Naive thymus-derived CD4-positive, alpha-beta T cell (primary cell): ENCODE measurements at regions of chr1 and their contacts with region 1.

Region 1: DNA sequence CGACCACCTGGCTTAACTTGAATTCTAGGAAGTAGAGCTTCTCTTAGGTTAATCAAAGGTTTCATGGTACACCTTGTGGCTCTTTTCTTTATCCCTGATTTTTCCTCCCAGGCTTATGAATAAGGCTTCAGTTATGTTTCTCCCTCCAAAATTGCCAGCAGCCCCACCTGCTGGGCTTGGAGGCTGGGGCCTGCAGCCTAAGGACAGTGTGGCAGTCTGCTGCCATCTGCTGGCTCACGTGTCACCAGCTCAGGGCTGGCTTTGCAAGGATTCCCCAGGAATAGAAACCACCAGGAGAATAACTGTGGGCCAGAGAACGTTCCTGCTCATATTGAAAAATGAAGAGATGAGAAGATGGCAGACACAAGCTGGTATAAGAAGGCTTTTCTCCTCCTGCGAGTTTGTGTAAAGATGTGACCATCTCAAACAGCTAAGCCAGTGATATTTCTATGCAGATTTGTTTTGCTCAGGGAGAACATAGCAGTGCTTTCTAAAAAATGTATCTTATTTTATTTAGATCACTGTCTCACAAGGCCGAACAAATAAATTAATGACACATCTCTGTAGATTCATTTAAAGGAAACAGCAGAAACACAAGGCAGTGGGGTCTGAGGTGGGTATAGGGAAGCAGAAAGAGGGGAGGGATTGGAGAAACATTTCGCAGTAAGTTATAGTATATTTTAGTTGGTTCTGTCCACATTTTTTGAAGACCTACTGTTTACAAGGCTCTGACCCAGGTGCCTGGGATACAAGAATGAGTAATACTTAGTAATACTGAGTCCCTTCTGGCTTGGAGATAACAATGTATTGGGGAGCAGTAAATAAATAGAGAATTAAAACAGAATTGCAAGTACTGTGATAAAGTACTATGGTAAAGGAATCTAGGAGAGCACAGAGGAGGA is 291.1 kb upstream of the SGIP1 start:
- DNase-seq: peak; percentile 43 to 75 (median 65)
- ATAC-seq: peak; percentile 93
- H3K4me3 ChIP-seq: no peak overlapping the region
- H3K4me3 Mint-ChIP-seq: no peak overlapping the region
- H3K27ac ChIP-seq: no peak overlapping the region
- H3K27ac Mint-ChIP-seq: no peak overlapping the region
- H3K4me1 ChIP-seq: peaks cover 17 to 36% of the 10 kb centered on the region in 2 donors
- H3K4me1 Mint-ChIP-seq: peaks cover 7 to 31% (median 15%) of the 10 kb centered on the region in 7 donors
- H3K27me3 ChIP-seq: no peaks in the 10 kb centered on the region
- H3K27me3 Mint-ChIP-seq: peaks cover 6 to 7% (median 6%) of the 10 kb centered on the region in 5 donors

Region 2: DNA sequence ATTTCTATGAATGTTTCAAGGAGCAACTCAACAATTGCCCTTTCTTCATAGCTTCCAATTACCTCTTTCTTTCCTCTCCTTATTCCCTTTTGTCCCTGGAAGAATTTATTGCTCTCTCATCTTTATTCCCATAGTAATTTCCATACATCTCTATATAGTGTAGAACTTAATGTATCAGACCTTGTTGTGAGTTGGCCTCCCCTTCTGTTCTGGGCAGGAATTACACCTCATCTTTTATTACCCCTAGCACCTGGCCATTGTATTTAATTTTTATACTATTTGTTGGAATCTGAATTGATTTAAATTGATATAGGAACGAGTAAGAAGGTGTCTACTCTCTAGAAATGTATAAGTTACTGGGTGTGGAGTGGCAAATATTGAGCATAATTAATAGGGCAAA is 1658.4 kb before region 1 on chr1:
- CTCF ChIA-PET with region 1: no interaction called
- POLR2A ChIA-PET with region 1: no interaction called
- intact Hi-C with region 1: no loop called
- DNase-seq: no peak
- ATAC-seq: no peak
- H3K4me3 ChIP-seq: no peak overlapping the region
- H3K4me3 Mint-ChIP-seq: no peak overlapping the region
- H3K27ac ChIP-seq: no peak overlapping the region
- H3K27ac Mint-ChIP-seq: peak overlapping the region in 1 of 9 donors; percentile 11
- H3K4me1 ChIP-seq: peaks cover 0 to 7% of the 10 kb centered on the region in 2 donors
- H3K4me1 Mint-ChIP-seq: peaks cover 3 to 22% (median 12%) of the 10 kb centered on the region in 7 donors
- H3K27me3 ChIP-seq: no peaks in the 10 kb centered on the region
- H3K27me3 Mint-ChIP-seq: peaks cover 0 to 3% (median 0%) of the 10 kb centered on the region in 5 donors

Region 3: DNA sequence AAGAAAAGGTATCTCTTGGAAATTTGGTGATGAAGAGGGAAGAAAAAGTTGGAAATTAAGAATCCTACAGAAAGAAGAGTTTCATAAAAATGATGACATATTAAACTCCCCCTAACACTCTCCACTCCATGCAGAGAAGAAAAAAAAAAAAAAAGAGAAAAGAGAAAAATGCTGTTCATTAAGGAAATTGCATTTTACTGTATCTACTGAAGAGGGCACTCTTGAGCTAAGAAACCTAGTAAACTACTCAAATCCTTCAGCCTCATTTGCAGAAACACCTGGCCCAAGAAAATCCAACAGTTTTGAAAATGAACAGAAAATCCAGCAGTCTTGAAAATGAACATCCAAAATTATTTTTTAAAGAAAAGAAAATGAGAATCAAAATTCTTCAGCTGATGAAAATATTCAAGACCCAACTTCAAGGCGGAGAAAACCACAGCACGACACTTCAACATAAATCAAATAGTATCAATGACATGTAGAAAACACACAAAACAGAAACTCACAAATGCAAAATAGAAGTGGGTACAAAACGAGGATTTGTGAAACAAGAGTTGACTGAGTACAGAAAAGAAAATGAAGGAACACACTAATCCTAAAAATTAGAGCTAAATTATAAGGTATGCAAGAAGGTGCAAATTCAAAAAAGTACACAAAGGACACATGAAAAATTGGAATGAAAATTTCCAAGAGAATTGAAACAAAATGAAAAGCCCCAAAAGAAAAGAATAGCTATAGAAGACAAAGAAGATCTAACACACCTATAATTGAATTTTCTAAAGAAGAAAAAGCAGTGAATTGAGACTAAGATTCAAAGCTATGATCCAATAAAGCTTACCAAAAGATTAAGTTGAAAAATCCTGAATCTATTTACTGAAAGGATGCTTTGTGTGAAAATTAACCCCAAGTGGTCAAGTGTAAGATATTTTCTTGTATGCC is 1006.8 kb before region 1 on chr1:
- CTCF ChIA-PET with region 1: interaction called, 4 read pairs
- POLR2A ChIA-PET with region 1: no interaction called
- intact Hi-C with region 1: loop called in 1 of 2 experiments (anchors 5 kb)
- DNase-seq: peak in 4 of 9 donors; percentile 12 to 28 (median 22)
- ATAC-seq: peak; percentile 54
- H3K4me3 ChIP-seq: no peak overlapping the region
- H3K4me3 Mint-ChIP-seq: no peak overlapping the region
- H3K27ac ChIP-seq: no peak overlapping the region
- H3K27ac Mint-ChIP-seq: no peak overlapping the region
- H3K4me1 ChIP-seq: no peaks in the 10 kb centered on the region
- H3K4me1 Mint-ChIP-seq: peaks cover 2 to 18% (median 2%) of the 10 kb centered on the region in 7 donors
- H3K27me3 ChIP-seq: no peaks in the 10 kb centered on the region
- H3K27me3 Mint-ChIP-seq: peaks cover 6 to 23% (median 14%) of the 10 kb centered on the region in 5 donors

Region 4: GRCh38 chr1:65812065-65812464 is 430.8 kb before region 1 on chr1:
- CTCF ChIA-PET with region 1: no interaction called
- POLR2A ChIA-PET with region 1: no interaction called
- intact Hi-C with region 1: loop called in 1 of 2 experiments (anchors 1 kb)
- DNase-seq: peak in 1 of 9 donors; percentile 67
- ATAC-seq: peak; percentile 94
- H3K4me3 ChIP-seq: no peak overlapping the region
- H3K4me3 Mint-ChIP-seq: peak overlapping the region in 1 of 10 donors; percentile 3
- H3K27ac ChIP-seq: no peak overlapping the region
- H3K27ac Mint-ChIP-seq: peak overlapping the region in 1 of 9 donors; percentile 67
- H3K4me1 ChIP-seq: no peaks in the 10 kb centered on the region
- H3K4me1 Mint-ChIP-seq: peaks cover 0 to 26% (median 0%) of the 10 kb centered on the region in 7 donors
- H3K27me3 ChIP-seq: no peaks in the 10 kb centered on the region
- H3K27me3 Mint-ChIP-seq: peaks cover 18 to 24% (median 19%) of the 10 kb centered on the region in 5 donors

Region 5: GRCh38 chr1:66088787-66089186 is 154.1 kb before region 1 on chr1:
- CTCF ChIA-PET with region 1: no interaction called
- POLR2A ChIA-PET with region 1: no interaction called
- intact Hi-C with region 1: loop called in 1 of 2 experiments (anchors 5 kb)
- DNase-seq: no peak
- ATAC-seq: no peak
- H3K4me3 ChIP-seq: no peak overlapping the region
- H3K4me3 Mint-ChIP-seq: no peak overlapping the region
- H3K27ac ChIP-seq: no peak overlapping the region
- H3K27ac Mint-ChIP-seq: no peak overlapping the region
- H3K4me1 ChIP-seq: no peaks in the 10 kb centered on the region
- H3K4me1 Mint-ChIP-seq: peaks cover 0 to 7% (median 4%) of the 10 kb centered on the region in 7 donors
- H3K27me3 ChIP-seq: no peaks in the 10 kb centered on the region
- H3K27me3 Mint-ChIP-seq: peaks cover 1 to 22% (median 12%) of the 10 kb centered on the region in 5 donors

Region 6: GRCh38 chr1:66231217-66231616 is 11.7 kb before region 1 on chr1:
- CTCF ChIA-PET with region 1: interaction called, 12 read pairs
- POLR2A ChIA-PET with region 1: interaction called, 3 read pairs
- intact Hi-C with region 1: no loop called
- DNase-seq: no peak
- ATAC-seq: no peak
- H3K4me3 ChIP-seq: no peak overlapping the region
- H3K4me3 Mint-ChIP-seq: no peak overlapping the region
- H3K27ac ChIP-seq: no peak overlapping the region
- H3K27ac Mint-ChIP-seq: no peak overlapping the region
- H3K4me1 ChIP-seq: no peaks in the 10 kb centered on the region
- H3K4me1 Mint-ChIP-seq: peaks cover 0 to 4% (median 0%) of the 10 kb centered on the region in 7 donors
- H3K27me3 ChIP-seq: no peaks in the 10 kb centered on the region
- H3K27me3 Mint-ChIP-seq: peaks cover 11 to 19% (median 14%) of the 10 kb centered on the region in 5 donors

Region 7: DNA sequence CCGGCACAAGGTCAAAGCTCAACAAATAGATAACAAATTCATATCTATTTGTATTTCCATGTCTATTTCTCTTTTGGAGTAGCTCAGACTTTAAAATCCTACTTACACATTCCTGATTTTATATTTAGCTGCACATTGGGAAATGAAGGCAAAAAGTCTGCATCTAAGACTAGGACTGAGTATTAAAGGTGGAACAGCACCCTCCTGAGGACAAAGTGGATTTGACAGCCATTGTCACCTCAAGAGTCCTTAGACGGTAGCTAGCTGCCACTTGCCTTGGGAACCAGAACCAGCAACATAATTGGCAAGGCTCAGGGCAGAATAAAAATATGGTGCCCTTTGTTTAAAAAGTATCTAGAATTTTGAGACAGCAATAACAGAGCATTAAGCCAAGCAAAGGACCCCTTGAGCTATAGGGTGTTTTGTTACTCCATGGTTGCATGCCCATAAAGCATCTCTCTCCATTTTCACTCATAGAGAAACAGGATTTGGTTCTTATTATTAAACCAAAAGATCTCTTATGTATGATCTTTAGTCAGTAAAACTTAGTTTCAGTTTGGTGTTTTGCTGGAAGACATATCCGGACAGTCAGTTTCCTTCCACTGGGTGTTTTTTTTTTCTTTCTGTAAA is 261.1 kb after region 1 on chr1:
- CTCF ChIA-PET with region 1: interaction called, 5 read pairs
- POLR2A ChIA-PET with region 1: no interaction called
- intact Hi-C with region 1: loop called in 1 of 2 experiments (anchors 5 kb)
- DNase-seq: peak in 6 of 9 donors; percentile 2 to 24 (median 10)
- ATAC-seq: peak; percentile 60
- H3K4me3 ChIP-seq: no peak overlapping the region
- H3K4me3 Mint-ChIP-seq: no peak overlapping the region
- H3K27ac ChIP-seq: no peak overlapping the region
- H3K27ac Mint-ChIP-seq: no peak overlapping the region
- H3K4me1 ChIP-seq: no peaks in the 10 kb centered on the region
- H3K4me1 Mint-ChIP-seq: no peaks in the 10 kb centered on the region
- H3K27me3 ChIP-seq: no peaks in the 10 kb centered on the region
- H3K27me3 Mint-ChIP-seq: peaks cover 31 to 53% (median 43%) of the 10 kb centered on the region in 5 donors